Activated B cell treated with CpG ODN at 0.5 μM for 24 hours (primary cell): ENCODE measurements at regions of chr6 and their contacts with region 1.

Region 1: DNA sequence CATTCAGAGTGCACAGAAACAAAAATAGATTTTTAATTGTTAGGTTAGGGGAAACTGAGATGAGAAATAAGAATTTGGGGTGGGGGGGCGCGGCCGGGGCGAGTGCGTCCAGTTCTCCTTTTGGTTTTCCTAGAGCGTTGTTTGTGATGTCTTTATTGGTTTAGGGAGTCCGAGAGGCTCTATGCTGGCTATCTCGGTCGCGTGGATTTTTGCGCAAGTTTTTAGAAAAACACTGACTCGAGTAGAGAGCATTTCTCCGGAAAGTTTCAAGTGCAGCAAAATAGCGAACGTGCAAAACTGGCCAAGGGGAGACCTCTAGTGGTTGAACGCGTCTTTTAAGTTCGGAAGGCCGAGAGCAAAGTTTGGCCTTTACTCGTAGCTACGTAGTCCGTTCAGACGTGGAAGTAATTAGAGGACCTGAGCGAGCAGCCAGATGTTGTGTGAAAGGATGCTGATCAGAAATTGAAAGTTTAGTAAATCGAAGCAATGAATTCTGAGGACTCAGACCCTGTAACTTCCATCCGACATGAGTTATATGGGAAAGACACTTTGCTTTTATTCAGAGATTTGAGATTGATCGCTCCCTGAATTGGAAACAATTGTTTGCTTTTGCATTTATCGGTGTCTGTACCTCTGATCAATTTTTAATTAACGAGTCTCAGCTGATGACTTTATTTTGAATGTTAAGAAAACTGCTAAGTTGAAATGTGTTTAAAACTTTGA is 2.7 kb downstream of the L3MBTL3 start:
- DNase-seq: peak; percentile 50
- ATAC-seq: peak; percentile 58
- H3K4me3 Mint-ChIP-seq: peak overlapping the region; percentile 97
- H3K27ac Mint-ChIP-seq: peak overlapping the region; percentile 96
- H3K4me1 Mint-ChIP-seq: peaks cover 25% of the 10 kb centered on the region
- H3K27me3 Mint-ChIP-seq: no peaks in the 10 kb centered on the region
- CTCF ChIP-seq: peak; percentile 29

Region 2: GRCh38 chr6:129393654-129394053 is 627.4 kb before region 1 on chr6:
- CTCF ChIA-PET with region 1: no interaction called
- POLR2A ChIA-PET with region 1: no interaction called
- intact Hi-C with region 1: loop called (anchors 5 kb)
- DNase-seq: no peak
- ATAC-seq: peak; percentile 92
- H3K4me3 Mint-ChIP-seq: peak overlapping the region; percentile 9
- H3K27ac Mint-ChIP-seq: no peak overlapping the region
- H3K4me1 Mint-ChIP-seq: peaks cover 23% of the 10 kb centered on the region
- H3K27me3 Mint-ChIP-seq: peaks cover 5% of the 10 kb centered on the region
- CTCF ChIP-seq: no peak

Region 3: DNA sequence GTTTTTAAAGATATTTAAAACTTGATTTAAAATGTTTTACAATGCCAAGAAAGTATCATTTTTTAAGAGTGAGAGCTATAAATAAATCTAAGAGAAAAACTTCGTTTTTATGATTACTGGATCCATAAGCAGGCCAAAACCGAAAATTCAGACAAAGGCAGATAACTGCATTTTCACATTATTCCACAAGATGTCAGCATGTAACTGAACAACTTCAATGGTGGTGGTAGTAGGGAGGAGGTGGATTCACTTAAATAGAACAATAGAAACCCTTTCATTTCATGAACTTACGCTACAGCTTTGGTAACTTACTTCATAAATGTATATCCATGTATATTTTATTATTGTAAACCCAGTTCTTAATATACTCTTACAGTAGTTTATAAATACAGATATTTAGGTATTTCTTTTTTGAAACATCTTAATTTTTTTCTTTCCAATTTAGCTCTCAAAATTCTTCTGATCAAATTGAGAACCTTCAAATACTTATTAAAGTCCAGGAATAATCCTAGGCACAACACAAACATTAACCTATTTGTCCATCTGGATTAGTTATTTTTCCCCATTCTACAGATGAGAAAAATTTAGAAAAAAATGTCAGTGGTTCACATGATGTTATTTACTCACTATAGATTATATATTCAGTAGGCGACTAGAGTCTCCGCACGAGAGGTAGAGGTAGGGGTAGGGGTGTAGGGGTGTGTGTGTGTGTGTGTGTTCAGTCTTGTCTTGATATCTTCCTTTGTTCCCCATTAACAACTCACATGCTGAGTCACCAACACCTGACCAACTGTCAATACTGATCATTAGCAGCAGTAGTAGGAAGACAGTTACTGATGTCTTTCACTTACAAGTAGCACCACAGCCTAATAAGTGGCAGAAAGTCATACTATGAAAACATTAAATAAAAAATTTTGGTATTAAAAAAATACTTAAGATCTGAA is 422.6 kb before region 1 on chr6:
- CTCF ChIA-PET with region 1: interaction called, 38 read pairs
- POLR2A ChIA-PET with region 1: interaction called, 5 read pairs
- intact Hi-C with region 1: loop called (anchors 1 kb)
- DNase-seq: no peak
- ATAC-seq: peak; percentile 93
- H3K4me3 Mint-ChIP-seq: no peak overlapping the region
- H3K27ac Mint-ChIP-seq: no peak overlapping the region
- H3K4me1 Mint-ChIP-seq: peaks cover 5% of the 10 kb centered on the region
- H3K27me3 Mint-ChIP-seq: no peaks in the 10 kb centered on the region
- CTCF ChIP-seq: peak; percentile 53

Region 4: GRCh38 chr6:129683601-129684322 is 337.3 kb before region 1 on chr6:
- CTCF ChIA-PET with region 1: no interaction called
- POLR2A ChIA-PET with region 1: no interaction called
- intact Hi-C with region 1: loop called (anchors 1 kb)
- DNase-seq: no peak
- ATAC-seq: peak; percentile 99
- H3K4me3 Mint-ChIP-seq: peak overlapping the region; percentile 50
- H3K27ac Mint-ChIP-seq: peak overlapping the region; percentile 76
- H3K4me1 Mint-ChIP-seq: peaks cover 50% of the 10 kb centered on the region
- H3K27me3 Mint-ChIP-seq: no peaks in the 10 kb centered on the region
- CTCF ChIP-seq: no peak

Region 5: GRCh38 chr6:129774697-129775447 is 246.2 kb before region 1 on chr6:
- CTCF ChIA-PET with region 1: no interaction called
- POLR2A ChIA-PET with region 1: no interaction called
- intact Hi-C with region 1: loop called (anchors 2 kb)
- DNase-seq: no peak
- ATAC-seq: no peak
- H3K4me3 Mint-ChIP-seq: no peak overlapping the region
- H3K27ac Mint-ChIP-seq: no peak overlapping the region
- H3K4me1 Mint-ChIP-seq: no peaks in the 10 kb centered on the region
- H3K27me3 Mint-ChIP-seq: peaks cover 11% of the 10 kb centered on the region
- CTCF ChIP-seq: no peak

Region 6: DNA sequence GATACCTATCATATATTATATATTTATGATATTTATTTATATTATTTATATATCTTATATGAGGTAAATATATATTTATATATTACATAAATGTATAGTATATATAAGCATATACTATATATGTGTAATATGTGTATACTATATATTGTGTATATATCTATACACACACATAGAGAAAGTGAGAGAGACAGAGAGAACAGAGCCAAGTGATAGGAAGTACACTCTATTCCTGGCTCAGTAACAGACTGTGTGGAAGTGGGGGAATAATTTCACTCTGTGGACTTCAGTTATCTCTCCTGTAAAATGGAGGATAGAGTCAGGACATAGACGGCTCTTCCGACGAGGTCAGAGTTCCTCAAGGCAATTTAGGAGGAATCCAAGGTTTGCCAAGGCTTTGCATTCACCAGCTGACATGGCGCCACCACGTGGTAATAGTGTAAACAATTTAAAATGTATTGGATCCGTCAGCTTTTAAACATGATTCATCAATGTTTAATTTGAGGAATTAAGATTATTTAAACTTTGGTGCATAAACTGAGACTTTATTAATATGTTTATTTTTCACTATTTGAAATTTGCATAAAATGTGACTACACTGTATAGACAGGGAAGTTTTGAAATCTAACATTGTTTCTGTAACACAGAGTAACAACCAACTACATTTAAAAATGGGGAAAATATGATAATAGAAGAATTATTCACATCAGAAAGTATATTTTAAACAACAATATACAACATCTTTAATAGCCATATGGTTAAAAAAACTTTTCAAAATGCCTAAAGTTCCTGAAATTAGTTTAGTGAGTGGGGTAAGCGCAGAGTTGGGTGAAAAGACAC is 84.5 kb before region 1 on chr6:
- CTCF ChIA-PET with region 1: interaction called, 4 read pairs
- POLR2A ChIA-PET with region 1: no interaction called
- intact Hi-C with region 1: loop called (anchors 1 kb)
- DNase-seq: no peak
- ATAC-seq: peak; percentile 50
- H3K4me3 Mint-ChIP-seq: no peak overlapping the region
- H3K27ac Mint-ChIP-seq: no peak overlapping the region
- H3K4me1 Mint-ChIP-seq: peaks cover 4% of the 10 kb centered on the region
- H3K27me3 Mint-ChIP-seq: peaks cover 18% of the 10 kb centered on the region
- CTCF ChIP-seq: peak; percentile 42

Region 7: DNA sequence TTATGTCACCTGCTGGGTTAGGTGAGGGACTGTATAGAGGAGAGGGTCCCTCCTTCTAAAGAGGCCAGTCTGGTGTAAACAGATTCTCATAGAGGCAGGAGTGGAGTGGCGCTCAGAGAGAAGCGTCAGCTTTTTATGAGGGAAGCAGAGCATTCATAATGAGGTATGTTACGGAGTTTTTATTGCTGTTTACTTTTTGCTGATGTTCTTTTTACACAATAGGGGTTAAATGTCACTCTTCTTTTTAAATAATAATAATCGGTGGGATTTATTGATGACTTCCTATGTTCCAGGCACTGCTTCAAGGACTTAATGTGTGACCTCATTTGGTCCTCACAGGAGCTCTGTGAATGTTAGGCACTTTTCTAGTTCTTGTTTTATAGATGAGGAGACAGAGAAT is 77.2 kb after region 1 on chr6:
- CTCF ChIA-PET with region 1: no interaction called
- POLR2A ChIA-PET with region 1: no interaction called
- intact Hi-C with region 1: no loop called
- DNase-seq: no peak
- ATAC-seq: no peak
- H3K4me3 Mint-ChIP-seq: no peak overlapping the region
- H3K27ac Mint-ChIP-seq: no peak overlapping the region
- H3K4me1 Mint-ChIP-seq: peaks cover 8% of the 10 kb centered on the region
- H3K27me3 Mint-ChIP-seq: no peaks in the 10 kb centered on the region
- CTCF ChIP-seq: no peak

Region 8: DNA sequence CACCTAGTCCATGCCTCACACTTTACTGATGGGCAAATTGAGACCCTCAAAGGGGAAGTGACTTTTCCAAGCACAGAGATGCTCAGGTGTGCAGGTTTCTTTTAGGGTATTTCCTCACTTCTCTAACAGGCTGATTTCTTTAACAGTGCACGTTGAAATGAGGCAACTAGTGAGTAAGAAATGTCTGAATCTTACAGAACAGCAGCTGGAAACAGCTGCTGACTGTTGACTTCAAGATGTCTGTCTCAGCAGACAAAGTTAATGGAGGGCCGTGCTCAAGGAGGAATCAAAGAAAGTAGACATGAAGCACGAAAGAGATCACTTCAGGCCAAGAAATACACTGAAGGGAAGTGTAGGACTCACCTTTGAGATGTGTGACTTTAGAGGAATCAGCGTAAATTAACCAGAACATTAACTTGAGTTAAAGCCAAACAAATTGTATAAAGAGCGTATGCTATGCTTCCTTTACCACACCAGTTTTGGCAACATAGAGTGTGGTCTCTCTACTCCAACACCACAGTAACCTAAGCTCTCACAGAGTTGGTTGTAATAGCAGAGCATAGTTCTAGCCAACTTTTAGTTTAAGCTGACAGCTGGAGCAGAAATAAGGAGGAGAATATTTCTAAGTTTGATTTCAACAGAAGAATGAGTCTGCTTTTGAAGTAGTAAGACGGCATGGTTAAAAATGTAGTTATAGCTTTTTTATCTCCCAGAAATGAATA is 140.8 kb after region 1 on chr6:
- CTCF ChIA-PET with region 1: no interaction called
- POLR2A ChIA-PET with region 1: no interaction called
- intact Hi-C with region 1: no loop called
- DNase-seq: no peak
- ATAC-seq: peak; percentile 68
- H3K4me3 Mint-ChIP-seq: no peak overlapping the region
- H3K27ac Mint-ChIP-seq: peak overlapping the region; percentile 7
- H3K4me1 Mint-ChIP-seq: peaks cover 6% of the 10 kb centered on the region
- H3K27me3 Mint-ChIP-seq: peaks cover 1% of the 10 kb centered on the region
- CTCF ChIP-seq: no peak